Gastrocnemius medialis (tissue), 4 donors: ENCODE measurements at regions of chr16 and their contacts with region 1.

Region 1: DNA sequence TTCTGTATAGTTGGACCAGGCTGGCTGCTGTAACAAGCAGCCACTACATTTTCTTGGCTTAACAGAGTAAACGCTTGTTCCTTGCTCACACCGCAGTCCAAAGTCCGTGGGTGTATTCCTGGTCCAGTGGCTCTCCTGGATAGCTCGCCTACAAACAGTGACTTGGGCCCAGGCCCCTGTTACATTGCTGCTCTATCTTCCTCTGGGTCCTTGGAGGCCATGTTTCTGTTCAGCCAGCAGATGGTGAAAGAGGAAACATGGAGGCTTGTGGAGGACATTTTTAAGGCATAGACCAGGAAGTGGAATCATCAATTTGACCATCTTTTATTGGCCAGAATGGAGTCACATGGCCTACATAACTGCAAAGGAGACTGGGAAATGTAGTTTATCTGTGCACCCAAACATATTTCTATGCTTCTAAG is 55.1 kb downstream of the ATP2C2 start:
- DNase-seq: no peak
- ATAC-seq: no peak
- H3K4me3 ChIP-seq: no peak overlapping the region
- H3K27ac ChIP-seq: no peak overlapping the region
- H3K4me1 ChIP-seq: no peaks in the 10 kb centered on the region
- H3K27me3 ChIP-seq: peaks cover 0 to 3% (median 2%) of the 10 kb centered on the region in 3 donors
- CTCF ChIP-seq: no peak
- POLR2A ChIP-seq: no peak

Region 2: DNA sequence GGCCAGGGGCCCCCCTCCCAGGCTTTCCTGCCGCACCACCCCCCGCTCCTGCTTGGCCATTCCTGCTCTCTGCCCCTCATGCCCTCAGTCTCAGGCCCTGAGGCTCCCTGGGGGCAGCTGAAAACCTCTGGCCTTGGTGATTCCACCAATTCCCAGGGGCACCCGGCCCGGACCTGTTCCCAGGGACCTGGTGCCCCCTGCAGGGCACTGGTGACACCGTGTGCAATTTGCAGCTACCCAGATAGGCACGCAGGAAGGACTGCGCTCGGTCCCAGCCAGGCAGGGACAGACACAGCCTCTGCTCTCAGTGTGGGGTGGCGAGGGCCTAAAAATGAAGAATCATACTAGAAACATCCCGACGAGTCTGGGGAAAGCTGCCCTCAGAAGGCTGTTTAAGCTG is 115.3 kb before region 1 on chr16:
- in situ Hi-C with region 1: loop called in 1 of 4 experiments (anchors 25 kb)
- intact Hi-C with region 1: no loop called
- DNase-seq: no peak
- ATAC-seq: peak; percentile 21 to 30
- H3K4me3 ChIP-seq: no peak overlapping the region
- H3K27ac ChIP-seq: no peak overlapping the region
- H3K4me1 ChIP-seq: no peaks in the 10 kb centered on the region
- H3K27me3 ChIP-seq: peaks cover 0 to 20% (median 9%) of the 10 kb centered on the region in 3 donors
- CTCF ChIP-seq: peak in 3 of 5 experiments; percentile 42 to 52 (median 50)
- POLR2A ChIP-seq: no peak

Region 3: GRCh38 chr16:84498859-84499620 is 75.6 kb after region 1 on chr16:
- in situ Hi-C with region 1: no loop called
- intact Hi-C with region 1: no loop called
- DNase-seq: no peak
- ATAC-seq: no peak
- H3K4me3 ChIP-seq: no peak overlapping the region
- H3K27ac ChIP-seq: no peak overlapping the region
- H3K4me1 ChIP-seq: peaks cover 5 to 6% of the 10 kb centered on the region in 2 donors
- H3K27me3 ChIP-seq: no peaks in the 10 kb centered on the region
- CTCF ChIP-seq: no peak
- POLR2A ChIP-seq: no peak

Region 4: GRCh38 chr16:84532291-84532724 is 108.9 kb after region 1 on chr16:
- in situ Hi-C with region 1: no loop called
- intact Hi-C with region 1: no loop called
- DNase-seq: peak; percentile 41 to 70
- ATAC-seq: peak; percentile 85 to 90
- H3K4me3 ChIP-seq: no peak overlapping the region
- H3K27ac ChIP-seq: peak overlapping the region; percentile 50 to 62 (median 59)
- H3K4me1 ChIP-seq: peaks cover 11 to 25% of the 10 kb centered on the region in 2 donors
- H3K27me3 ChIP-seq: no peaks in the 10 kb centered on the region
- CTCF ChIP-seq: no peak
- POLR2A ChIP-seq: no peak

Region 5: GRCh38 chr16:84647828-84648594 is 224.6 kb after region 1 on chr16 and contains the start of gene KLHL36:
- in situ Hi-C with region 1: no loop called
- intact Hi-C with region 1: no loop called
- DNase-seq: peak in 1 of 2 donors; percentile 36
- ATAC-seq: peak; percentile 86
- H3K4me3 ChIP-seq: peak within 1 kb of the TSS; percentile 64 to 99 (median 83)
- H3K27ac ChIP-seq: peak within 1 kb of the TSS; percentile 66 to 81 (median 76)
- H3K4me1 ChIP-seq: peaks cover 13 to 16% of the 10 kb centered on the region in 2 donors
- H3K27me3 ChIP-seq: no peaks in the 10 kb centered on the region
- CTCF ChIP-seq: no peak
- POLR2A ChIP-seq: peak in 1 of 2 donors; percentile 57
- total RNA-seq, gene KLHL36: 15.6 to 33.9 (median 18.2) TPM